ENCODE measurements at regions of chr21 and their contacts with region 1.

Region 1: DNA sequence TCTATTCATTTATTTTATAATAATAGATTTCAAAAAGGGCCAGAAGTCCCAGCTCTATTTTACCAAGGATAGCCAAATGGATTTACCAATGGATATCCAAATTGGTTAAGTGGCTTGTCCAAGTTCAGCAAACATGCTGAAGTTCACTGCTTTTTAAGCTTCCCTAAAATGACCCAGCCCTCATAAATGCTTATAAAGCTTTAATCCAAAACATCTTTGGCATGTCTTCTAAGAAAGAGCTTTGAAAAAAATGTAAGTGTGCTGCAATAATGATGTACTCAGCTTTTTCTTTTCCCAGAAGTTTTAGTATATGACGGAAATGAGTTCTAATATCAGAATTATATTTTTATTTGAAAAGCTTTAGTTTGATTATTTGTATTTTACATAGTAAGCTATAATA is 451.5 kb upstream of the ADAMTS5 start:
- DNase-seq: no peak
- H3K4me3 ChIP-seq: no peak overlapping the region
- CTCF ChIP-seq: no peak

Region 2: GRCh38 chr21:27371115-27371974 is 47.0 kb before region 1 on chr21:
- in situ Hi-C with region 1: loop called (anchors 5 kb)
- DNase-seq: no peak
- H3K4me3 ChIP-seq: no peak overlapping the region
- CTCF ChIP-seq: no peak